Gastrocnemius medialis (tissue), 4 donors: ENCODE measurements at regions of chr6 and their contacts with region 1.

Region 1: GRCh38 chr6:151330134-151330696 is 61.1 kb downstream of the ZBTB2 start:
- DNase-seq: no peak
- ATAC-seq: no peak
- H3K4me3 ChIP-seq: no peak overlapping the region
- H3K27ac ChIP-seq: no peak overlapping the region
- H3K4me1 ChIP-seq: peaks cover 2 to 5% of the 10 kb centered on the region in 2 donors
- H3K27me3 ChIP-seq: peaks cover 2 to 13% (median 4%) of the 10 kb centered on the region in 3 donors
- CTCF ChIP-seq: no peak
- POLR2A ChIP-seq: no peak

Region 2: GRCh38 chr6:151014404-151015100 is 315.7 kb before region 1 on chr6:
- in situ Hi-C with region 1: loop called in 3 of 4 experiments (anchors 5 to 10 kb)
- intact Hi-C with region 1: no loop called
- DNase-seq: peak; percentile 31 to 42
- ATAC-seq: no peak
- H3K4me3 ChIP-seq: no peak overlapping the region
- H3K27ac ChIP-seq: no peak overlapping the region
- H3K4me1 ChIP-seq: no peaks in the 10 kb centered on the region
- H3K27me3 ChIP-seq: no peaks in the 10 kb centered on the region
- CTCF ChIP-seq: peak; percentile 82 to 92 (median 86)
- POLR2A ChIP-seq: no peak